GM12878 (cell line): ENCODE measurements at regions of chr18 and their contacts with region 1.

Region 1: GRCh38 chr18:64409511-64409910 is 260.6 kb upstream of the LINC00305 start:
- DNase-seq: no peak
- ATAC-seq: peak; percentile 81
- H3K4me3 ChIP-seq: no peak overlapping the region
- H3K27ac ChIP-seq: no peak overlapping the region
- H3K4me1 ChIP-seq: no peaks in the 10 kb centered on the region
- H3K27me3 ChIP-seq: no peaks in the 10 kb centered on the region
- CTCF ChIP-seq: peak; percentile 39 to 42 (median 41)
- EP300 ChIP-seq: no peak
- POLR2A ChIP-seq: no peak
- RAD21 ChIP-seq: peak; percentile 58

Region 2: GRCh38 chr18:63700501-63700900 is 709.0 kb before region 1 on chr18:
- CTCF ChIA-PET with region 1: no interaction called
- POLR2A ChIA-PET with region 1: no interaction called
- RAD21 ChIA-PET with region 1: no interaction called
- SMC1A ChIA-PET with region 1: no interaction called
- in situ Hi-C with region 1: no loop called
- intact Hi-C with region 1: no loop called
- DNase-seq: no peak
- ATAC-seq: no peak
- H3K4me3 ChIP-seq: no peak overlapping the region
- H3K27ac ChIP-seq: no peak overlapping the region
- H3K4me1 ChIP-seq: no peaks in the 10 kb centered on the region
- H3K27me3 ChIP-seq: no peaks in the 10 kb centered on the region; a peak in 1 of 4 replicates
- CTCF ChIP-seq: no peak
- EP300 ChIP-seq: no peak
- POLR2A ChIP-seq: no peak
- RAD21 ChIP-seq: no peak

Region 3: GRCh38 chr18:64017870-64018269 is 391.6 kb before region 1 on chr18:
- CTCF ChIA-PET with region 1: interaction called, 34 read pairs
- POLR2A ChIA-PET with region 1: no interaction called
- RAD21 ChIA-PET with region 1: interaction called, 10 read pairs
- SMC1A ChIA-PET with region 1: interaction called, 8 read pairs
- in situ Hi-C with region 1: no loop called
- intact Hi-C with region 1: loop called (anchors 1 kb)
- DNase-seq: no peak
- ATAC-seq: peak; percentile 68
- H3K4me3 ChIP-seq: no peak overlapping the region
- H3K27ac ChIP-seq: no peak overlapping the region
- H3K4me1 ChIP-seq: no peaks in the 10 kb centered on the region
- H3K27me3 ChIP-seq: no peaks in the 10 kb centered on the region; a peak in 1 of 4 replicates
- CTCF ChIP-seq: peak; percentile 32 to 60 (median 45); a peak in 5 of 6 replicates
- EP300 ChIP-seq: no peak
- POLR2A ChIP-seq: no peak
- RAD21 ChIP-seq: peak; percentile 78

Region 4: GRCh38 chr18:64037812-64038414 is 371.6 kb before region 1 on chr18:
- CTCF ChIA-PET with region 1: interaction called, 58 read pairs
- POLR2A ChIA-PET with region 1: no interaction called
- RAD21 ChIA-PET with region 1: interaction called, 18 read pairs
- SMC1A ChIA-PET with region 1: interaction called, 38 read pairs
- in situ Hi-C with region 1: no loop called
- intact Hi-C with region 1: loop called (anchors 2 kb)
- DNase-seq: no peak
- ATAC-seq: peak; percentile 91
- H3K4me3 ChIP-seq: no peak overlapping the region
- H3K27ac ChIP-seq: no peak overlapping the region
- H3K4me1 ChIP-seq: no peaks in the 10 kb centered on the region
- H3K27me3 ChIP-seq: no peaks in the 10 kb centered on the region
- CTCF ChIP-seq: peak; percentile 38 to 63 (median 57); a peak in 5 of 6 replicates
- EP300 ChIP-seq: no peak
- POLR2A ChIP-seq: no peak
- RAD21 ChIP-seq: peak; percentile 71

Region 5: DNA sequence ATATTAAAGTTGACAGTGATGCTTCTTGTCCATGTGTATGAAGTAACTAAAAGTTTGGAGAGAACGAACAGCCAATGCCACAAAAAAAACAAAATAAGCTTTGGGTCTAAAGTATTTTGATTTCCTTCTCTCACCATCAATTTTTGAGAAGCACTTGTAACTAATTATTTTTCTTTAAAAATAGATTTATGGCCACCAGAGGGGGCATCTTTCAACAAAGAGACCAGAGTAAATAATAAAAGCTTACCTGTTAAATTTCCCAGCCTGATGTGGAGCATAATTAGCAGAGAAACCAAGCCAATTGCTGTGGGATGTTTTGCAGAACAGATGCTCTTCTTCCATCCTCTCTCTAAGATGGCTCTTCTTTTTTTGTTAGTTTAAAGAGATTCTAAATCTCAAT is 289.6 kb before region 1 on chr18:
- CTCF ChIA-PET with region 1: interaction called, 41 read pairs
- POLR2A ChIA-PET with region 1: no interaction called
- RAD21 ChIA-PET with region 1: interaction called, 12 read pairs
- SMC1A ChIA-PET with region 1: interaction called, 34 read pairs
- in situ Hi-C with region 1: no loop called
- intact Hi-C with region 1: loop called (anchors 10 kb)
- DNase-seq: no peak
- ATAC-seq: peak; percentile 35; the same call in 2 of the 3 replicates
- H3K4me3 ChIP-seq: no peak overlapping the region
- H3K27ac ChIP-seq: no peak overlapping the region
- H3K4me1 ChIP-seq: no peaks in the 10 kb centered on the region
- H3K27me3 ChIP-seq: no peaks in the 10 kb centered on the region
- CTCF ChIP-seq: no peak; a peak in 2 of 6 replicates
- EP300 ChIP-seq: no peak
- POLR2A ChIP-seq: no peak
- RAD21 ChIP-seq: peak; percentile 21; the same call in 1 of the 2 replicates

Region 6: DNA sequence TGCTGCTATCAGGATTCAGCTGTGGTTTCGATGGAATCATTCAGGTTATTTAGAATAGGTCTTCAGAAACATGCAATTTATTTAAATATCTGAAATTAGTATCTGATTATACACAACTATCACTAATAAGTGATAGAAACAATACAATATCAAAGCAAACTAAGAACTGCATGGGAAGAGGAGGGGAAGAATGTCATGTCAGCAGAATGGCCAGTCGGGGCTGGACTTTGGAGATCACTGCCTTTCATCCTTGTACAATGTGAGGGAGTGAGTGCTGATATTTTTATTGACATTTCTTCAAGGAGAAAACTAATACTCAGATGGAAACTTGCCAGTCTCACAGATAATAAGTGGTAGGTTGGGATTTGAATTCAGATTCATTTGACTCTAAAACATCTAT is 36.7 kb before region 1 on chr18:
- CTCF ChIA-PET with region 1: interaction called, 3 read pairs
- POLR2A ChIA-PET with region 1: no interaction called
- RAD21 ChIA-PET with region 1: no interaction called
- SMC1A ChIA-PET with region 1: no interaction called
- in situ Hi-C with region 1: no loop called
- intact Hi-C with region 1: loop called (anchors 5 kb)
- DNase-seq: no peak
- ATAC-seq: no peak
- H3K4me3 ChIP-seq: no peak overlapping the region
- H3K27ac ChIP-seq: no peak overlapping the region
- H3K4me1 ChIP-seq: no peaks in the 10 kb centered on the region
- H3K27me3 ChIP-seq: no peaks in the 10 kb centered on the region
- CTCF ChIP-seq: no peak
- EP300 ChIP-seq: no peak
- POLR2A ChIP-seq: no peak
- RAD21 ChIP-seq: no peak